ENCODE measurements at regions of chrX and their contacts with region 1.

Region 1: GRCh38 chrX:129759576-129760061 is 20.1 kb upstream of the SASH3 start:
- DNase-seq: peak in 6 of 9 experiments; percentile 55 to 84 (median 66)
- ATAC-seq: peak; percentile 79
- H3K4me3 ChIP-seq: no peak overlapping the region
- H3K4me3 Mint-ChIP-seq: peak overlapping the region; percentile 29
- H3K27ac ChIP-seq: peak overlapping the region in 1 of 2 experiments; percentile 56
- H3K27ac Mint-ChIP-seq: peak overlapping the region; percentile 81
- H3K4me1 ChIP-seq: peaks cover 60% of the 10 kb centered on the region
- H3K4me1 Mint-ChIP-seq: peaks cover 64% of the 10 kb centered on the region
- H3K27me3 ChIP-seq: no peaks in the 10 kb centered on the region
- H3K27me3 Mint-ChIP-seq: no peaks in the 10 kb centered on the region
- CTCF ChIP-seq: no peak

Region 2: DNA sequence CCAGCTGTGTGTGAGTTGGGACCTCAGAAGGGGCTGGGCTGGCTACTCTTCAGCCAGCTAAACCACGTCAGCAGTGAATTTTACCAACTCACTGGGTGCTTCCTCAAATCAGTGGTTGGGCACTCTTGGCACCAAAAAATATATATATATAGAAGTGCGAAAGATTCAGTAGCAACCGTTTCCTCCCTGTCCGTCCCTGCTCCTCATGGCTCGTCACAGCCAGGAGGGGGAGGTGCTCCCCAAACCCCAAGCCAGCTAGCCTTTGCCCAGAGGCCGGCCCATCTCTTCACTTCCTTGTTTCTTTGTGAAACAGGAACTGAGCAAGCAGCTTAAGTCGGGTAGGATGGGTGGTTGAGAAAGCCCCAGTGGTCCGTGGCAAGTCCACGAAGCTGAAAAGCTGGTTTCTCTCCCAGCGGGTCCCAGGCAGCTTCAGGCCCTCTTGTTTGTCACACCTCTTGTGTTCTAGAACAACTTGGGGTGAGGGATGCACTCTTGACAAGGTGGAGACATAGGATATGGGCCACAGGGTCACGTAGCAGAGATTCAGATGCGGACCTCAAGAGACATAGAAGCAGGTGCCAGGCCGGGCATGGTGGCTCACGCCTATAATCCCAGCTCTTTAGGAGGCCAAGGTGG is 13.3 kb after region 1 on chrX:
- CTCF ChIA-PET with region 1: interaction called, 6 read pairs
- POLR2A ChIA-PET with region 1: interaction called, 23 read pairs
- intact Hi-C with region 1: loop called in 1 of 2 experiments (anchors 1 kb)
- DNase-seq: peak in 5 of 9 experiments; percentile 39 to 83 (median 54)
- ATAC-seq: no peak
- H3K4me3 ChIP-seq: no peak overlapping the region
- H3K4me3 Mint-ChIP-seq: peak overlapping the region; percentile 54
- H3K27ac ChIP-seq: peak overlapping the region in 1 of 2 experiments; percentile 75
- H3K27ac Mint-ChIP-seq: peak overlapping the region; percentile 95
- H3K4me1 ChIP-seq: peaks cover 85% of the 10 kb centered on the region
- H3K4me1 Mint-ChIP-seq: peaks cover 77% of the 10 kb centered on the region
- H3K27me3 ChIP-seq: no peaks in the 10 kb centered on the region
- H3K27me3 Mint-ChIP-seq: no peaks in the 10 kb centered on the region
- CTCF ChIP-seq: no peak

Region 3: GRCh38 chrX:129798888-129799287 is 39.3 kb after region 1 on chrX:
- CTCF ChIA-PET with region 1: interaction called, 4 read pairs
- POLR2A ChIA-PET with region 1: interaction called, 4 read pairs
- intact Hi-C with region 1: loop called (anchors 5 kb)
- DNase-seq: no peak
- ATAC-seq: no peak
- H3K4me3 ChIP-seq: no peak overlapping the region
- H3K4me3 Mint-ChIP-seq: no peak overlapping the region
- H3K27ac ChIP-seq: peak overlapping the region in 1 of 2 experiments; percentile 28
- H3K27ac Mint-ChIP-seq: peak overlapping the region; percentile 77
- H3K4me1 ChIP-seq: peaks cover 5% of the 10 kb centered on the region
- H3K4me1 Mint-ChIP-seq: peaks cover 26% of the 10 kb centered on the region
- H3K27me3 ChIP-seq: no peaks in the 10 kb centered on the region
- H3K27me3 Mint-ChIP-seq: no peaks in the 10 kb centered on the region
- CTCF ChIP-seq: no peak

Region 4: DNA sequence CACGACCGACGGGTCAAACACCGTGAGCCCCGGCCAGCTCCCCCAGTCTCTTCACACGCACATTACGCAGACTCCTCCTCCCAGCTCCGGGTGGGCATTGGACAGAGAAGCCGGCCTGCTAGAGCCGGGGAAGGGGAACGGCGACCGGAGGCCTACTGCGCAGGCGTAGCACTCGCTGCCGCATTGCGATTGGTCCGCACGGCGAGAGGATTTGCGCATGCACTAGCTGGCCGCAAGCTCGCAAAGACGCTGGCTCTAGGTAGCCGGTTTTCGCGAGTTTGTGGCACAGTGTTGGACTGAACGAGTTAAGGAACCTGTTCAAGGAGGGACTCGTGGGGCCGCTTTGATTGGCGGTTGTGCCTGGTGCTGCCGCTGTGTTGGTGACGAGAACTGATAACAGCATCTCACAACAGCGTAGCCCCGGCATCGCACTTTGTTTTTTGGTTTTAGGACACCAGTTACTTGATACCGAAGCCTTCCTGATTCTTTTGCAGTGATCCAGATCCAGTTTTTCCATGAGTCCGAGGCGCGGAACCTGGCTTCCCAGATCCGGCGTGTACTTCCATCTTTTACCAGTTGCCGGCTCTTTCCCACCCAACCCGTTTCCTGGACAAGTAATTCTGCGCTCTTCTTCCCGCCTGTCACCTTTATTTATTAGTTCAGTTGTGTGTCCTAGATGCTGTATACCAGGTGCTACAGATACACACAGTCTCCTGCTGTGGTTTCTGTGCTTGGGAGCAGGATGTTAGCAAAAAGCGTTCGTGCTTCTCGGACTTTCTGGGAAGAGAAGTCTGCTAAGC is 406.3 kb after region 1 on chrX and contains the start of gene AIFM1:
- CTCF ChIA-PET with region 1: no interaction called
- POLR2A ChIA-PET with region 1: no interaction called
- intact Hi-C with region 1: loop called in 1 of 2 experiments (anchors 10 kb)
- DNase-seq: peak; percentile 68 to 95 (median 85)
- ATAC-seq: peak; percentile 87
- H3K4me3 ChIP-seq: peak within 1 kb of the TSS; percentile 57 to 74
- H3K4me3 Mint-ChIP-seq: peak within 1 kb of the TSS; percentile 90
- H3K27ac ChIP-seq: peak within 1 kb of the TSS; percentile 54 to 80
- H3K27ac Mint-ChIP-seq: peak within 1 kb of the TSS; percentile 90
- H3K4me1 ChIP-seq: peaks cover 17% of the 10 kb centered on the region
- H3K4me1 Mint-ChIP-seq: peaks cover 42% of the 10 kb centered on the region
- H3K27me3 ChIP-seq: no peaks in the 10 kb centered on the region
- H3K27me3 Mint-ChIP-seq: no peaks in the 10 kb centered on the region
- CTCF ChIP-seq: no peak
- total RNA-seq, gene AIFM1: 4.4 to 4.9 TPM

Measured in CD8-positive, alpha-beta T cell (primary cell).